ENCODE measurements at regions of chr12 and their contacts with region 1.

Region 1: DNA sequence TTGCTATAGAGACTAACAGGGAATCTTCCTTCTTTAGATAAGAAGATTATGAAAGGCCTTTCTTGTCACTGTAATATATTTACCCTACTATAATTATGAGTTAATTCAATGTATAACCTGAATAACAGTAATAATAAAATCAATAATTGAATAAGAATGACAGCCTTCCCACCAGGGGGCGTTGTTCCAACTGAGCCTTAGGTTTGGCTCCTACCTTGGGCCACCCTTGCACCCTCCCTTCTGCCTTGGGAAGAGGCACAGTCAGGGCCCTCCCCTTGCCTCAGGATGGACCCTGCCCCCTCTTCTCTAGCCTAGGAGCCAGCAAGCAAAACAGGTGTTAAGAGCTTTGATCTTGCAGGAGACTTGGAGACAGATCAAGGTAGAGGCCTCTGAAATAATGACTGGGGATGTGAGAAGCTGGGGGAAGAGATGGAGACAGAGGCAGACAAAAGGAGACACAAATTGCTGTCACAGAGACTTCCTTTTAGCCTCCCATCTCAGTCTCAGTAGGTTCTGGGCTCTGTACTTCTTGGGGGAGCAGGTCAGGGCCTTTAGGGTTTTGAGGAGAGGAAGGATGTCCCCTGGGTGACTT is 40.1 kb upstream of the CISTR start:
- DNase-seq: peak; percentile 46
- ATAC-seq: no peak
- H3K4me3 Mint-ChIP-seq: no peak overlapping the region
- H3K27ac Mint-ChIP-seq: no peak overlapping the region
- H3K4me1 Mint-ChIP-seq: no peaks in the 10 kb centered on the region
- H3K27me3 Mint-ChIP-seq: peaks cover 15% of the 10 kb centered on the region
- CTCF ChIP-seq: peak; percentile 77

Region 2: GRCh38 chr12:53775478-53776145 is 16.2 kb before region 1 on chr12:
- CTCF ChIA-PET with region 1: interaction called, 15 read pairs
- POLR2A ChIA-PET with region 1: no interaction called
- intact Hi-C with region 1: no loop called
- DNase-seq: no peak
- ATAC-seq: no peak
- H3K4me3 Mint-ChIP-seq: no peak overlapping the region
- H3K27ac Mint-ChIP-seq: no peak overlapping the region
- H3K4me1 Mint-ChIP-seq: no peaks in the 10 kb centered on the region
- H3K27me3 Mint-ChIP-seq: peaks cover 18% of the 10 kb centered on the region
- CTCF ChIP-seq: no peak

Region 3: DNA sequence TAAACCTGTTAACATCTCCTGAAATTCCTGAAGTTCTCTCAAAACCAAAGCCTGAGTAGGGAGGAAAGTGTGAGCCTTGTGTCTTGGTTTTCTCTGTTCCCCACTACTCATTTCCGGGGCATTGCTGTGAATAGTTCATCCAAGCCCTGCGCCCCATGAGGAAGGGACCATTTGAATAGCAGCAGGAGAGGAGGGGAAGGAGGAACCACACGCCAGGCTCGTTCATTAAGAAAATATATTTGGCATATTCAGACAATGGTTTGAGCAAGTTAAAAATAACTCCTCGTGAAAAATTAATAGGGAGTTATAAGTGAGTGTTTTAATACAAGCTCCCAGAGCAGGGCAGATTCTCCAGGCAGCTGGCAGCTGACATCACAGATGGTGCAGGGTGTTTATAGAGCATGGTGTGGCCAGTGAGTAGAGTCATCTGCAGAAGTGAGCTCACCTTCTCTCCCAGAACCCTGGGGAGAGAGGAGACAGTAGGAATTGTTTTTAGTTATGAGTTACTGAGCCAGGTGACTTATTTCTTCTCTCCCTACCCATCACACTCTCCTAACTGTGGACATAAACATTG is 10.5 kb before region 1 on chr12:
- CTCF ChIA-PET with region 1: interaction called, 15 read pairs
- POLR2A ChIA-PET with region 1: no interaction called
- intact Hi-C with region 1: no loop called
- DNase-seq: no peak
- ATAC-seq: no peak
- H3K4me3 Mint-ChIP-seq: no peak overlapping the region
- H3K27ac Mint-ChIP-seq: no peak overlapping the region
- H3K4me1 Mint-ChIP-seq: no peaks in the 10 kb centered on the region
- H3K27me3 Mint-ChIP-seq: peaks cover 34% of the 10 kb centered on the region
- CTCF ChIP-seq: no peak

Region 4: GRCh38 chr12:53806721-53807120 is 14.9 kb after region 1 on chr12:
- CTCF ChIA-PET with region 1: interaction called, 15 read pairs
- POLR2A ChIA-PET with region 1: no interaction called
- intact Hi-C with region 1: no loop called
- DNase-seq: no peak
- ATAC-seq: no peak
- H3K4me3 Mint-ChIP-seq: no peak overlapping the region
- H3K27ac Mint-ChIP-seq: no peak overlapping the region
- H3K4me1 Mint-ChIP-seq: no peaks in the 10 kb centered on the region
- H3K27me3 Mint-ChIP-seq: peaks cover 28% of the 10 kb centered on the region
- CTCF ChIP-seq: no peak

Region 5: GRCh38 chr12:53856132-53856531 is 64.3 kb after region 1 on chr12:
- CTCF ChIA-PET with region 1: no interaction called
- POLR2A ChIA-PET with region 1: no interaction called
- intact Hi-C with region 1: no loop called
- DNase-seq: no peak
- ATAC-seq: no peak
- H3K4me3 Mint-ChIP-seq: no peak overlapping the region
- H3K27ac Mint-ChIP-seq: no peak overlapping the region
- H3K4me1 Mint-ChIP-seq: no peaks in the 10 kb centered on the region
- H3K27me3 Mint-ChIP-seq: peaks cover 20% of the 10 kb centered on the region
- CTCF ChIP-seq: no peak

Measured in activated CD8-positive, alpha-beta T cell treated with anti-CD3 and anti-CD28 coated beads for 36 hours (primary cell).